ENCODE measurements at regions of chr9 and their contacts with region 1.

Region 1: DNA sequence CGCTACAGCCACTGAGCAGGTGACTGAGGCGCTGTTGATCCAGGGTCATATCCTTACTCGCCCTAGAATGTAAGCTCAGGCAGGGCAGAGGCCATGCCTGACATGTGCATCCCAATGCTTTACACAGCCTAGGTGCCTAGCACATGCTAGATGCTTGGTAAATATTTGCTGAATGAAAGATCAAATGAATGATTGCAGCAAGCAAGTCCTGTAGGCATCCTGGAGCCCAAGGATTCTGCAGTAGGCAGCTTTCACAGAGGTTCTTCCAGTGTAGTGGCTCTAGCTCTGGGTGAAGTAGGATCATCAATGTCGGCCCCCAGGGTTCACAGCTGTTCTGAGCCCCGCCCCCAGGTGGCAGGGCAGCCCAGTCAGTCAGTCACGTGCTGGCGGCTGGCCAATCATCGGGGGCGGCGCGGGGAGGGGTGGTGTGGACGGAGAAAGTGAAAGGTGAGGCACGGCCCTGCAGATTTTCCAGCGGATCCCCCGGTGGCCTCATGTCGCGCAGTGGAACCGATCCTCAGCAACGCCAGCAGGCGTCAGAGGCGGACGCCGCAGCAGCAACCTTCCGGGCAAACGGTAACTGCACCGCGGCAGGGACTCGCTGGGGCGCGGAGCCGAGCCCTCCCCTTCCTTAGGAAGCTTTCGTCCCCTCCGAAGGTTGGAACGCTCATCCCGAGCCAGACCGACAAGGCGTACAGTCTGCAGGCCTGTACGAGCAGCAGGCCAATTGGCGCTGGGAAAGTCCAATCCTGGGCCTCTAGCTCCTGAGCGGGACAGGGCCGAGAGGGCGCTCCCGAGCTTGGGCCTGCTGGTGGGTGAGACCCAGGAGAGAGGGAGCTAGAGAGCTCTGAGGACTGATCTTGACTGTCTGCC is at the start of gene GALT:
- DNase-seq: peak; percentile 72 to 98 (median 93)
- ATAC-seq: peak; percentile 89 to 93 (median 90)
- H3K4me3 ChIP-seq: peak within 1 kb of the TSS; percentile 86 to 94
- H3K4me3 Mint-ChIP-seq: peak within 1 kb of the TSS; percentile 91 to 95 (median 94)
- H3K27ac ChIP-seq: peak within 1 kb of the TSS; percentile 68
- H3K27ac Mint-ChIP-seq: peak within 1 kb of the TSS; percentile 89 to 90
- H3K4me1 ChIP-seq: peaks cover 10 to 30% of the 10 kb centered on the region in 2 experiments
- H3K4me1 Mint-ChIP-seq: peaks cover 26 to 43% (median 31%) of the 10 kb centered on the region in 3 donors
- H3K27me3 ChIP-seq: no peaks in the 10 kb centered on the region
- H3K27me3 Mint-ChIP-seq: no peaks in the 10 kb centered on the region
- total RNA-seq, gene GALT: 177 to 255 (median 215) TPM

Region 2: DNA sequence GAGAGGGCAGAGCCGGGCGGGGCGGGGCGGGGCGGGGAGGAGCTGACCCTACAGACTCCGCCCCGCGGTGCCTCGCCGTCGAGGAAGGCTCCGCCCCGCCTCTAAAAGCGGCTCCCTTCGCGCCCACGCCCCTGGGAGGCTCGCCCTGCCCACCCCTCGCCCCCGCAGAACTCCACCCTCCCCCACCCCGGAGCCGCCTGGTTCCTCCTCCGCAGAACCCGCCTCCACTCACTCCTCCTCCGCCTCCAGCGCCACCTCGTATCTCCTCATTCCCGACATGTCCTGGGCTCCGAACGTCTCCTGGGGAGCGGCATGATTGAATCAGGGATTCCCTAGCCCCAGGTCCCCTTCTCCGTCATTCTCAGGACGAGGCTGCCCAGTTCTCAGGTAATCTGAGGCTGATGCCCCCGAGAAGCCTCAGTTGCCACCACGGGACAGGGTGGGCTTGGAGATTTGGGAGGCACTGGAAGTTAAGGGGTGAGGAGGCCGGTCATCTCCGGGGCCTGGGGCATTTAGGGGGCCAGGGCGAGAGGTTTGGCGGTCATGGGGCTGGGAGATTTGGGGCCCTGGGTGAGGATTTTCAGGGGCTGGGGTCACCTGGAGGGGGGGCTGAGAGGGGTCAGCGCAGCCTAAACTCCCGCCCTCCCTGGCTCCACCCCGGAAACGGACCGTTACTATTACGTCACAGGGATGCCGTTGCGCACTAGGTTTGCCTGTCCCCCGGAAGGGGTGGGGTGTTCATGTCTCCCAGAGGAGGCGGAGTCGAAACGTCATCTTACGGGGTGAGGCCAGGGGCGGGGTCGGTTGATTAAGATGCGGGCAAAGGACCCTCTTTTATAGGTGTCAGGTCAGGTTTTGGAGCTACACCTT is 19.2 kb after region 1 on chr9:
- CTCF ChIA-PET with region 1: interaction called in 1 of 2 experiments, 39 read pairs
- POLR2A ChIA-PET with region 1: interaction called in 1 of 2 experiments, 5 read pairs
- DNase-seq: peak; percentile 66 to 95 (median 87)
- ATAC-seq: peak; percentile 80 to 88 (median 84)
- H3K4me3 ChIP-seq: peak overlapping the region; percentile 71 to 80
- H3K4me3 Mint-ChIP-seq: peak overlapping the region; percentile 82 to 90 (median 86)
- H3K27ac ChIP-seq: peak overlapping the region; percentile 97
- H3K27ac Mint-ChIP-seq: peak overlapping the region; percentile 87 to 88
- H3K4me1 ChIP-seq: peaks cover 19 to 52% of the 10 kb centered on the region in 2 experiments
- H3K4me1 Mint-ChIP-seq: peaks cover 47 to 60% (median 47%) of the 10 kb centered on the region in 3 donors
- H3K27me3 ChIP-seq: no peaks in the 10 kb centered on the region
- H3K27me3 Mint-ChIP-seq: no peaks in the 10 kb centered on the region

Region 3: GRCh38 chr9:34701769-34702736 is 55.6 kb after region 1 on chr9:
- CTCF ChIA-PET with region 1: interaction called, 3 to 10 read pairs
- POLR2A ChIA-PET with region 1: no interaction called
- DNase-seq: peak; percentile 43 to 86 (median 68)
- ATAC-seq: peak; percentile 76 to 81 (median 80)
- H3K4me3 ChIP-seq: peak overlapping the region; percentile 49 to 73
- H3K4me3 Mint-ChIP-seq: peak overlapping the region; percentile 75 to 81 (median 78)
- H3K27ac ChIP-seq: no peak overlapping the region
- H3K27ac Mint-ChIP-seq: peak overlapping the region in 1 of 2 donors; percentile 3
- H3K4me1 ChIP-seq: peaks cover 0 to 14% of the 10 kb centered on the region in 2 experiments
- H3K4me1 Mint-ChIP-seq: peaks cover 4 to 16% (median 6%) of the 10 kb centered on the region in 3 donors
- H3K27me3 ChIP-seq: peaks cover 0 to 4% of the 10 kb centered on the region in 2 experiments
- H3K27me3 Mint-ChIP-seq: peaks cover 1 to 10% of the 10 kb centered on the region in 2 donors